ENCODE measurements at regions of chr6 and their contacts with region 1.

Region 1: GRCh38 chr6:24991810-24992467 is 56.2 kb upstream of the RIPOR2 start:
- DNase-seq: peak in 4 of 5 donors; percentile 39 to 48 (median 44)
- ATAC-seq: peak in 3 of 4 donors; percentile 79 to 83 (median 83)
- H3K4me3 ChIP-seq: no peak overlapping the region
- H3K27ac ChIP-seq: peak overlapping the region in 1 of 12 donors; percentile 43
- H3K4me1 ChIP-seq: peaks cover 0 to 22% (median 0%) of the 10 kb centered on the region in 12 donors
- H3K27me3 ChIP-seq: no peaks in the 10 kb centered on the region
- CTCF ChIP-seq: peak; percentile 59 to 85 (median 74)
- POLR2A ChIP-seq: no peak

Region 2: GRCh38 chr6:24574809-24575208 is 417.1 kb before region 1 on chr6:
- intact Hi-C with region 1: no loop called
- DNase-seq: no peak
- ATAC-seq: no peak
- H3K4me3 ChIP-seq: no peak overlapping the region
- H3K27ac ChIP-seq: no peak overlapping the region
- H3K4me1 ChIP-seq: no peaks in the 10 kb centered on the region
- H3K27me3 ChIP-seq: peaks cover 0 to 9% (median 0%) of the 10 kb centered on the region in 9 donors
- CTCF ChIP-seq: no peak
- POLR2A ChIP-seq: no peak

Region 3: GRCh38 chr6:24720604-24721460 is 271.1 kb before region 1 on chr6:
- intact Hi-C with region 1: no loop called
- DNase-seq: peak; percentile 100
- ATAC-seq: peak; percentile 94 to 98 (median 96)
- H3K4me3 ChIP-seq: peak overlapping the region; percentile 75 to 97 (median 93)
- H3K27ac ChIP-seq: peak overlapping the region; percentile 93 to 100 (median 99)
- H3K4me1 ChIP-seq: peaks cover 0 to 42% (median 32%) of the 10 kb centered on the region in 12 donors
- H3K27me3 ChIP-seq: no peaks in the 10 kb centered on the region
- CTCF ChIP-seq: no peak
- POLR2A ChIP-seq: peak; percentile 87 to 99

Region 4: GRCh38 chr6:24883618-24884017 is 108.3 kb before region 1 on chr6:
- intact Hi-C with region 1: no loop called
- DNase-seq: no peak
- ATAC-seq: no peak
- H3K4me3 ChIP-seq: no peak overlapping the region
- H3K27ac ChIP-seq: no peak overlapping the region
- H3K4me1 ChIP-seq: peaks cover 0 to 24% (median 0%) of the 10 kb centered on the region in 12 donors
- H3K27me3 ChIP-seq: no peaks in the 10 kb centered on the region
- CTCF ChIP-seq: no peak
- POLR2A ChIP-seq: no peak

Region 5: GRCh38 chr6:24910961-24911712 is 80.8 kb before region 1 on chr6:
- intact Hi-C with region 1: loop called in 3 of 10 experiments (anchors 5 kb)
- DNase-seq: peak; percentile 65 to 77 (median 74)
- ATAC-seq: peak; percentile 40 to 83 (median 76)
- H3K4me3 ChIP-seq: peak overlapping the region; percentile 41 to 93 (median 68)
- H3K27ac ChIP-seq: peak overlapping the region in 11 of 12 donors; percentile 37 to 85 (median 68)
- H3K4me1 ChIP-seq: peaks cover 0 to 68% (median 23%) of the 10 kb centered on the region in 12 donors
- H3K27me3 ChIP-seq: no peaks in the 10 kb centered on the region
- CTCF ChIP-seq: no peak
- POLR2A ChIP-seq: no peak

Region 6: GRCh38 chr6:25070547-25071366 is 78.8 kb after region 1 on chr6:
- intact Hi-C with region 1: loop called in 1 of 10 experiments (anchors 5 kb)
- DNase-seq: peak; percentile 73 to 78 (median 76)
- ATAC-seq: peak in 3 of 4 donors; percentile 87 to 88 (median 87)
- H3K4me3 ChIP-seq: peak overlapping the region in 1 of 12 donors; percentile 20
- H3K27ac ChIP-seq: peak overlapping the region in 3 of 12 donors; percentile 31 to 58 (median 42)
- H3K4me1 ChIP-seq: peaks cover 0 to 6% (median 0%) of the 10 kb centered on the region in 12 donors
- H3K27me3 ChIP-seq: no peaks in the 10 kb centered on the region
- CTCF ChIP-seq: peak; percentile 87 to 96 (median 94)
- POLR2A ChIP-seq: no peak

Region 7: GRCh38 chr6:25404693-25405169 is 412.8 kb after region 1 on chr6:
- intact Hi-C with region 1: no loop called
- DNase-seq: no peak
- ATAC-seq: peak in 3 of 4 donors; percentile 47 to 65 (median 48)
- H3K4me3 ChIP-seq: peak overlapping the region in 3 of 12 donors; percentile 25 to 31 (median 27)
- H3K27ac ChIP-seq: peak overlapping the region in 2 of 12 donors; percentile 13 to 74
- H3K4me1 ChIP-seq: peaks cover 0 to 38% (median 10%) of the 10 kb centered on the region in 12 donors
- H3K27me3 ChIP-seq: no peaks in the 10 kb centered on the region
- CTCF ChIP-seq: no peak
- POLR2A ChIP-seq: no peak

Measured in heart left ventricle (tissue), 16 donors.